A549 (cell line): ENCODE measurements at regions of chr10 and their contacts with region 1.

Region 1: GRCh38 chr10:104353325-104354048 is at the start of gene CFAP58:
- DNase-seq: peak; percentile 85 to 90
- ATAC-seq: peak; percentile 88 to 97
- H3K4me3 ChIP-seq: peak within 1 kb of the TSS; percentile 48
- H3K27ac ChIP-seq: peak within 1 kb of the TSS; percentile 25 to 64; a peak in 4 of 6 replicates
- H3K4me1 ChIP-seq: peaks cover 20% of the 10 kb centered on the region
- CTCF ChIP-seq: peak; percentile 74
- EP300 ChIP-seq: no peak
- POLR2A ChIP-seq: 0 out of 2 replicates have a peak, but pooled peaks have one; percentile 14
- RAD21 ChIP-seq: no peak
- polyA plus RNA-seq, gene CFAP58: 0.16 and 0.22 TPM in 2 replicates

Region 2: GRCh38 chr10:104268716-104269645 is 84.5 kb before region 1 on chr10 and contains the start of gene GSTO2:
- CTCF ChIA-PET with region 1: interaction called, 141 read pairs
- POLR2A ChIA-PET with region 1: interaction called, 5 read pairs
- DNase-seq: peak; percentile 99 to 100
- ATAC-seq: peak; percentile 99 to 100
- H3K4me3 ChIP-seq: peak within 1 kb of the TSS; percentile 68
- H3K27ac ChIP-seq: peak within 1 kb of the TSS; percentile 83 to 91
- H3K4me1 ChIP-seq: peaks cover 13% of the 10 kb centered on the region; the same call in 2 of the 3 replicates
- CTCF ChIP-seq: no peak
- EP300 ChIP-seq: no peak
- POLR2A ChIP-seq: peak; percentile 83
- RAD21 ChIP-seq: no peak
- polyA plus RNA-seq, gene GSTO2: 5.7 and 6.3 TPM in 2 replicates

Region 3: DNA sequence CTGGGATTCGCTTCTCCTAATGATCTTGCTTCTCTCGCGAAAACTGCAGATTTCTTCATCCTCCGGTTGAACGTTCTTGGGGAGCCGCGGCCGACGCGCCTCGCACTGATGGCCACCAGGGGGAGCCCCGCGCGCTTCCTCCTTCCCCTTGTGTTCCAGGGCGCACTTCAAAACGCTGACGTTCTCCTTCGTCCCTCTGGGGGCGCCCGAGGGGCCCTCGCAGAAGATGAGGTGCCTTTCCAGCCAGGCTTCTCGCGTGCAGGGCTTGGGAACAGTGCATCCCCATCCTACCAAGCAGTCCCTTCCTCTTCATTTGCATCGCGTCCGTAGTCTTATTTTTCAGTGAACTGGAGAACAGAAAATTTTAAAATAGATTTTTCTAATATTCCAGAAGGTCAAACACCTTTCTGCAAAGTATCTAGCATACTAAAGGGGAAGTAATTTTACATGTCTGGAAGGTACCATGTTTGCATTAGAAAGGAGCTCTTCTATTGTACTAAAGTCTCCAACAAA is 62.0 kb before region 1 on chr10:
- CTCF ChIA-PET with region 1: interaction called, 339 read pairs
- POLR2A ChIA-PET with region 1: no interaction called
- DNase-seq: peak; percentile 86 to 88
- ATAC-seq: peak; percentile 97 to 98
- H3K4me3 ChIP-seq: no peak overlapping the region
- H3K27ac ChIP-seq: peak overlapping the region; percentile 12 to 62; a peak in 3 of 6 replicates
- H3K4me1 ChIP-seq: peaks cover 18% of the 10 kb centered on the region
- CTCF ChIP-seq: peak; percentile 99
- EP300 ChIP-seq: no peak
- POLR2A ChIP-seq: no peak
- RAD21 ChIP-seq: peak; percentile 85 to 91

Region 4: GRCh38 chr10:104308439-104308903 is 45.0 kb before region 1 on chr10:
- CTCF ChIA-PET with region 1: interaction called, 267 read pairs
- POLR2A ChIA-PET with region 1: interaction called, 3 read pairs
- DNase-seq: no peak
- ATAC-seq: no peak
- H3K4me3 ChIP-seq: no peak overlapping the region
- H3K27ac ChIP-seq: no peak overlapping the region
- H3K4me1 ChIP-seq: peaks cover 10% of the 10 kb centered on the region; the same call in 1 of the 3 replicates
- CTCF ChIP-seq: no peak
- EP300 ChIP-seq: no peak
- POLR2A ChIP-seq: no peak
- RAD21 ChIP-seq: no peak

Region 5: GRCh38 chr10:104328896-104329710 is 24.4 kb before region 1 on chr10:
- CTCF ChIA-PET with region 1: interaction called, 67 read pairs
- POLR2A ChIA-PET with region 1: interaction called, 4 read pairs
- DNase-seq: peak; percentile 51 to 90
- ATAC-seq: peak; percentile 78 to 79
- H3K4me3 ChIP-seq: peak overlapping the region; percentile 33; the same call in 2 of the 3 replicates
- H3K27ac ChIP-seq: peak overlapping the region; percentile 93 to 97
- H3K4me1 ChIP-seq: peaks cover 77% of the 10 kb centered on the region
- CTCF ChIP-seq: no peak
- EP300 ChIP-seq: peak; percentile 74 to 76; a peak in 3 of 5 replicates
- POLR2A ChIP-seq: no peak
- RAD21 ChIP-seq: 0 out of 5 replicates have a peak, but pooled peaks of 1 of the 2 experiments have one; percentile 26

Region 6: DNA sequence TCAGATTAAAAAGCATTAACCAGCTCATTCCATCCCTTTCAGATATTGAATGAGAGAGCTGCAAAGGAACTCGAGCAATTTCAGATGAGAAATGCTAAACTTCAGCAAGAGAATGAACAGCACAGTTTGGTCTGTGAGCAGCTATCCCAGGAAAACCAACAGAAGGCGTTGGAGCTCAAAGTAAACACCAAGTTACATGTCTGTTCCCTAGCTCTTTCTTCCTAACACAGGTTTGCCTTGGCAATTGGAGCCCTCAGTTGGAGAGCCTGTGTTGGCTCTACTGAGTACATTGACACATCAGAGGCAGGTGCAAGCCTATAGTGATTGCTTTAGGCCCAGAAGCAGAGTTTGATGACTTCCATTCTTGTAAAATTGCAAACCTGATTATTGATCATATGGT is 14.9 kb after region 1 on chr10:
- CTCF ChIA-PET with region 1: interaction called, 14 read pairs
- POLR2A ChIA-PET with region 1: no interaction called
- DNase-seq: no peak
- ATAC-seq: no peak
- H3K4me3 ChIP-seq: no peak overlapping the region
- H3K27ac ChIP-seq: no peak overlapping the region
- H3K4me1 ChIP-seq: no peaks in the 10 kb centered on the region
- CTCF ChIP-seq: no peak
- EP300 ChIP-seq: no peak
- POLR2A ChIP-seq: no peak
- RAD21 ChIP-seq: no peak